CD4-positive, alpha-beta T cell (primary cell): ENCODE measurements at regions of chr7 and their contacts with region 1.

Region 1: DNA sequence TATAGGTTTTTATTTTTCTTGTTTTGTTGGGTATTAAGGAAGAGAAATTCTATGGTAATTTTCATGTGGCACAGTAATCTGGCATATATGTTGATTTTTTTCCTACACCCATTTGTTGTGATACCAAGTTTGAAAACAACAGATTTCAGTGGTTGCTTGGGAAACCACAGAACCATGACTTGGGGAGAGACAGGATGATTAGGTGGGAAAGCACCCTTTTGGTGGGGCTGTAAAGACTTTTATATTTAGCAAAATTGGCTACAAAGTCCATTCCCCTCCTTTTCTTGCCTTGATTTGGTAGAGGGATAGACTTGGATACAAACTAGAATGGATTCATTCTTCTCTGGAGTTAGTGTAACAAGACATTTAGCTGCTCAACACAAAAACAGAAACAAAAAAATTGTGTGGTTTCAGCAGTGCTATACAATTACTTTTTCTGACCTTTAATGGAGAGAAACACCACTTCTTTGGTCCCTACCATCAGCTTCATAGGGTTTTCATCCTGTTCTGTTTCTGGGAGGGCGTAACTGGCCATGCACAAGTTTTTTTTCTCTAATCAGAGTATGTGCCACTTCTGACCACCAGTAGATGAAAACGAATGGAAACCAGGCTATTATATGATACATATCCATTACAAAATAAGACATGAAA is 52.7 kb downstream of the FIGNL1 start:
- DNase-seq: peak in 3 of 14 experiments; percentile 65 to 79 (median 79)
- ATAC-seq: peak; percentile 35
- H3K4me3 ChIP-seq: no peak overlapping the region
- H3K4me3 Mint-ChIP-seq: no peak overlapping the region
- H3K27ac ChIP-seq: peak overlapping the region; percentile 69 to 81
- H3K27ac Mint-ChIP-seq: peak overlapping the region; percentile 94
- H3K4me1 ChIP-seq: peaks cover 52% of the 10 kb centered on the region
- H3K4me1 Mint-ChIP-seq: peaks cover 82% of the 10 kb centered on the region
- H3K27me3 ChIP-seq: no peaks in the 10 kb centered on the region
- H3K27me3 Mint-ChIP-seq: no peaks in the 10 kb centered on the region
- CTCF ChIP-seq: no peak

Region 2: GRCh38 chr7:49660170-49660783 is 737.2 kb before region 1 on chr7:
- CTCF ChIA-PET with region 1: no interaction called
- POLR2A ChIA-PET with region 1: no interaction called
- intact Hi-C with region 1: no loop called
- DNase-seq: no peak
- ATAC-seq: no peak
- H3K4me3 ChIP-seq: no peak overlapping the region
- H3K4me3 Mint-ChIP-seq: no peak overlapping the region
- H3K27ac ChIP-seq: no peak overlapping the region
- H3K27ac Mint-ChIP-seq: no peak overlapping the region
- H3K4me1 ChIP-seq: no peaks in the 10 kb centered on the region
- H3K4me1 Mint-ChIP-seq: no peaks in the 10 kb centered on the region
- H3K27me3 ChIP-seq: no peaks in the 10 kb centered on the region
- H3K27me3 Mint-ChIP-seq: no peaks in the 10 kb centered on the region
- CTCF ChIP-seq: no peak

Region 3: GRCh38 chr7:50379082-50379481 is 18.4 kb before region 1 on chr7:
- CTCF ChIA-PET with region 1: interaction called, 3 read pairs
- POLR2A ChIA-PET with region 1: interaction called, 16 read pairs
- intact Hi-C with region 1: no loop called
- DNase-seq: no peak
- ATAC-seq: peak; percentile 34
- H3K4me3 ChIP-seq: no peak overlapping the region
- H3K4me3 Mint-ChIP-seq: peak overlapping the region; percentile 7
- H3K27ac ChIP-seq: peak overlapping the region; percentile 29 to 37
- H3K27ac Mint-ChIP-seq: no peak overlapping the region
- H3K4me1 ChIP-seq: peaks cover 77% of the 10 kb centered on the region
- H3K4me1 Mint-ChIP-seq: peaks cover 98% of the 10 kb centered on the region
- H3K27me3 ChIP-seq: no peaks in the 10 kb centered on the region
- H3K27me3 Mint-ChIP-seq: no peaks in the 10 kb centered on the region
- CTCF ChIP-seq: no peak

Region 4: GRCh38 chr7:50436133-50436806 is 38.8 kb after region 1 on chr7:
- CTCF ChIA-PET with region 1: no interaction called
- POLR2A ChIA-PET with region 1: no interaction called
- intact Hi-C with region 1: no loop called
- DNase-seq: peak in 1 of 14 experiments; percentile 41
- ATAC-seq: no peak
- H3K4me3 ChIP-seq: no peak overlapping the region
- H3K4me3 Mint-ChIP-seq: no peak overlapping the region
- H3K27ac ChIP-seq: no peak overlapping the region
- H3K27ac Mint-ChIP-seq: no peak overlapping the region
- H3K4me1 ChIP-seq: no peaks in the 10 kb centered on the region
- H3K4me1 Mint-ChIP-seq: no peaks in the 10 kb centered on the region
- H3K27me3 ChIP-seq: no peaks in the 10 kb centered on the region
- H3K27me3 Mint-ChIP-seq: no peaks in the 10 kb centered on the region
- CTCF ChIP-seq: no peak

Region 5: GRCh38 chr7:51111241-51111940 is 713.9 kb after region 1 on chr7:
- CTCF ChIA-PET with region 1: no interaction called
- POLR2A ChIA-PET with region 1: no interaction called
- intact Hi-C with region 1: no loop called
- DNase-seq: no peak
- ATAC-seq: no peak
- H3K4me3 ChIP-seq: no peak overlapping the region
- H3K4me3 Mint-ChIP-seq: no peak overlapping the region
- H3K27ac ChIP-seq: no peak overlapping the region
- H3K27ac Mint-ChIP-seq: no peak overlapping the region
- H3K4me1 ChIP-seq: no peaks in the 10 kb centered on the region
- H3K4me1 Mint-ChIP-seq: no peaks in the 10 kb centered on the region
- H3K27me3 ChIP-seq: no peaks in the 10 kb centered on the region
- H3K27me3 Mint-ChIP-seq: no peaks in the 10 kb centered on the region
- CTCF ChIP-seq: no peak